ENCODE measurements at regions of chr6 and their contacts with region 1.

Region 1: DNA sequence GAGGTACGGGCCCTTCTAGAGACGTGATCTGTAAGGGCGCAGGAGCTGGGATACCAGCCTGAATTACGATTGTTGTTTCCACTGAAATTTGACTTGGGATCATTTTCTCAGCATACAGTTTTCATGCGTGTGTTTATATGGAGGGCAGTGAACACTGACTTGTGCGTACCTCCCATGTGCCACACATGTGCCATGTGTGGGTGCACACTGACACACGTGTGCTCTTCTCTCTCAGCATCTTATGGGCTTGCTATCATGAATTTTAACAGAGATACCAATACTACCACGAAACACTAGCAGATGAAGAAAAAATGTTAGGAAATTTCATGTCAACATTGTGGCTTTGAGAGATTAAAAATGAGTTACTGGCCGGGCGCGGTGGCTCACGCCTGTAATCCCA is 39.1 kb downstream of the L3MBTL3 start:
- DNase-seq: no peak
- ATAC-seq: no peak
- H3K4me3 ChIP-seq: no peak overlapping the region
- H3K27ac ChIP-seq: no peak overlapping the region
- H3K4me1 ChIP-seq: no peaks in the 10 kb centered on the region
- H3K27me3 ChIP-seq: no peaks in the 10 kb centered on the region
- CTCF ChIP-seq: no peak

Region 2: GRCh38 chr6:129812145-129812777 is 245.2 kb before region 1 on chr6:
- CTCF ChIA-PET with region 1: no interaction called
- POLR2A ChIA-PET with region 1: interaction called, 10 read pairs
- in situ Hi-C with region 1: no loop called
- intact Hi-C with region 1: no loop called
- DNase-seq: no peak
- ATAC-seq: no peak
- H3K4me3 ChIP-seq: no peak overlapping the region
- H3K27ac ChIP-seq: no peak overlapping the region
- H3K4me1 ChIP-seq: no peaks in the 10 kb centered on the region
- H3K27me3 ChIP-seq: no peaks in the 10 kb centered on the region
- CTCF ChIP-seq: no peak